ENCODE measurements at regions of chr19 and their contacts with region 1.

Region 1: DNA sequence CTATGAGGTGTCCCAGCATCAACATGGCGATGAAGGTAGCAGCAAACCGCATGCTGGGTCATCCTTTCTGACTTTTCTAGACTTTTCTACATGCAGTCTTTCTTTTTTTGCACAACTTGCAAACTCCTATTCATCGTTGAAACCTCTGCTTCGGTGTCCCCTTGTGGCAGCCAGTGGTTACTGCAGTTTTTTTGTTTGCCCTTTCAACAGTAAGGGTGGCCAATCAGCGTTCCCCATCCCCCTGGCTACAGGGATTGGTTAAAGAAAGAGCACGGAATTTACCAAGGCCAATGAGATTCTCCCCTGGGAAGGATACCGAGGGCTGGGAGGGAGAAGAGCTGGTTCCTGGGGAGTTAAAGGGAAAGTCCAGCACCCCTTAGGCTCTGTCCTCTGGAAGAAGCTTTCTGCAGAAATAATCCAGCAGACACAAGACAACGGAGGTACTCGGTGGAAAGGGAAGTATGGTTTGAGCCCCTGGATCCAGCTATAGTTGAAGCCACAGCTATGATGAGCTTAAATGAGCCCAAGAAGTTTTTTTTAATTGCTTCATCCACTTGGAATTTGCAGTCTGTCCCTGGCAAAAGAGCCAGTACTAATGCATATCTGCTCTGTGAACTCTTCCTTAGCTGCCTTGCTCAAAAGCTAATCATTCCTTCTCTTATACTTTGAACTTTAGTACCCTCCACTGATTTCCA is 5.6 kb upstream of the LSM4 start:
- DNase-seq: peak; percentile 91
- ATAC-seq: peak; percentile 99
- H3K4me3 Mint-ChIP-seq: peak overlapping the region; percentile 70
- H3K27ac Mint-ChIP-seq: peak overlapping the region; percentile 89
- H3K4me1 Mint-ChIP-seq: peaks cover 19% of the 10 kb centered on the region
- H3K27me3 Mint-ChIP-seq: no peaks in the 10 kb centered on the region; the same call in none of the 2 replicates
- CTCF ChIP-seq: peak; percentile 86

Region 2: DNA sequence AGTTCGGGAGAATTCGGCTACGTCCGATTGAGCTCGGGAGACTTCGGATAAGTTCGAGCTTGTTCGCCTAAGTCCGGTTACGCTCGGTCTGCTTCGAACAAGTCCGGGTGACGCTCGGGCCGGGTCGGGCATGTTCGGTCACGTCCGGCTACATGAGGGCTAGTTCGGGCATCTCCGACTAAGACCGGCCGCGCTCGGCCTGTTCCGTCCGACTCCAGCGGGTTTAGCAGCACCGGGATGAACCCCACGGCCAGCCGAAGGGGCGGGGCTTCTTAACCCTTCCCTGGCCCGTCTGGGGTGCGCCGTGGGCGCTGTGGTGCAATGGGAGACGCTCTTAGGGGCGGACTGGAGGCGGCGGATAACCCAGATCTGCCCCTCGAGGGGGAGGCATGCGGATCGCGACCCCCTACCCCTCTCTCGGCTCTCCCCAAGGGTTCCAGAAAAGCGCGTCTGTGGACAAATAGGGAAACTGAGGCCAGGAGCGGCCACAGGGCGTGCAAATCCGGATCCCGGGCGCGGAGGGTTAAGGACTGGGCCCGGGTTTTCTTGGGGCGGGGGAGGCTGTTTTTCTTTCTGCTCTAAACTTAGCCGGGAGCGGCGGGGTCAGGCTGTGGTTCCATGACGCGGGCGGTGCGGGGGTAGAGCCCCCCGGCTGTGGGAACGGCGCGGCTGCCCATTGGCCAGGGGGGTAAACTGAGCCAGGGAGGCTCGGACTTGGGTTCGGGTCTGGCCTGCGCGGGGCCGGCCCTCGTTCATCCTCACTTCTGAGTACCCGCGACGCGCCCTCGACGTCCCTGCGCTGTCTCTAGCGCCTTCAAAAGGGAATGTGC is 103.7 kb before region 1 on chr19:
- CTCF ChIA-PET with region 1: interaction called, 13 read pairs
- POLR2A ChIA-PET with region 1: no interaction called
- DNase-seq: peak; percentile 100
- ATAC-seq: peak; percentile 91
- H3K4me3 Mint-ChIP-seq: peak overlapping the region; percentile 92
- H3K27ac Mint-ChIP-seq: peak overlapping the region; percentile 100
- H3K4me1 Mint-ChIP-seq: peaks cover 30% of the 10 kb centered on the region
- H3K27me3 Mint-ChIP-seq: peaks cover 42% of the 10 kb centered on the region
- CTCF ChIP-seq: no peak

Region 3: DNA sequence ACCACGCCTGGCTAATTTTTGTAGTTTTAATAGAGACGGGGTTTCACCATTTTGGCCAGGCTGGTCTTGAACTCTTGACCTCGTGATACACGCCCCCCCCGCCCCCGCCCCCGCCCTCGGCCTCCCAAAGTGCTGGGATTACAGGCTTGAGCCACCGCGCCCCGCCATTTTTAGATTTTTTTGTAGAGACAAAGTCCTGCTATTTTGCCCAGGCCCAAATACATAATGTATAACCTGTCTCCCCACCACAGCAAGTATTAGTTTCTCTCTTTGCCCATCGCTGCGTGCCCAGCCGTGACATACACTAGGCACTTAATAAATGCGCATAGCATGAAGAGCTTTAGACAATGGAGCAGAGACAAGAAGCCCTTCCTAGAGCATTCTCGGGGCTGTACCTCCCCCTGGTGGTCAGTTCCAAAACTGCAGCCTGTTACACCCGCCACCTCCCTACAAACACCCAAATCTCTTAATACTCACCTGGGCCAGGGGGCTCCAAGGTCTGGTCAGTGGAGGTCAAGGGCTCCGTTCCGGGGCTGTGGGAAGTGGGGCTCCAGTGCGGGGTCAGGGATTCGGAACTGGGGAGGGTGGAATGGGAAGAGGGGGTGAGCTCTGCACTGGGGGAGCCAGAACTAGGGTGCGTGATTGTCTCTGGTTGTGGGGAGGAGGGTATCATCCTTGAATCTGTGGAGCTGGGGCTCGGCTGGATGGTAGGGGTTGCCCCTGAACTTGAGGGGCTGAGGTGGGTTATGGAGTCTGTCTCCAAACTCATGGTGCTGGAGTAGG is 76.7 kb before region 1 on chr19:
- CTCF ChIA-PET with region 1: interaction called, 14 read pairs
- POLR2A ChIA-PET with region 1: no interaction called
- DNase-seq: peak; percentile 93
- ATAC-seq: peak; percentile 83
- H3K4me3 Mint-ChIP-seq: no peak overlapping the region
- H3K27ac Mint-ChIP-seq: peak overlapping the region; percentile 35; the same call in 1 of the 2 replicates
- H3K4me1 Mint-ChIP-seq: peaks cover 22% of the 10 kb centered on the region
- H3K27me3 Mint-ChIP-seq: peaks cover 13% of the 10 kb centered on the region
- CTCF ChIP-seq: peak; percentile 99

Region 4: GRCh38 chr19:18291590-18292461 is 36.7 kb before region 1 on chr19:
- CTCF ChIA-PET with region 1: interaction called, 35 read pairs
- POLR2A ChIA-PET with region 1: interaction called, 3 read pairs
- DNase-seq: peak; percentile 73
- ATAC-seq: peak; percentile 14
- H3K4me3 Mint-ChIP-seq: peak overlapping the region; percentile 83
- H3K27ac Mint-ChIP-seq: peak overlapping the region; percentile 99
- H3K4me1 Mint-ChIP-seq: peaks cover 48% of the 10 kb centered on the region
- H3K27me3 Mint-ChIP-seq: peaks cover 3% of the 10 kb centered on the region; the same call in 1 of the 2 replicates
- CTCF ChIP-seq: no peak

Region 5: GRCh38 chr19:18349524-18350128 is 21.1 kb after region 1 on chr19:
- CTCF ChIA-PET with region 1: interaction called, 16 read pairs
- POLR2A ChIA-PET with region 1: no interaction called
- DNase-seq: peak; percentile 71
- ATAC-seq: 0 out of 2 replicates have a peak, but pooled peaks have one; percentile 40
- H3K4me3 Mint-ChIP-seq: no peak overlapping the region
- H3K27ac Mint-ChIP-seq: peak overlapping the region; percentile 19; the same call in 1 of the 2 replicates
- H3K4me1 Mint-ChIP-seq: peaks cover 27% of the 10 kb centered on the region
- H3K27me3 Mint-ChIP-seq: no peaks in the 10 kb centered on the region
- CTCF ChIP-seq: 0 out of 2 replicates have a peak, but pooled peaks have one; percentile 18

Region 6: GRCh38 chr19:18408053-18408476 is 79.6 kb after region 1 on chr19:
- CTCF ChIA-PET with region 1: interaction called, 30 read pairs
- POLR2A ChIA-PET with region 1: no interaction called
- DNase-seq: peak; percentile 74
- ATAC-seq: peak; percentile 47
- H3K4me3 Mint-ChIP-seq: no peak overlapping the region
- H3K27ac Mint-ChIP-seq: no peak overlapping the region
- H3K4me1 Mint-ChIP-seq: peaks cover 6% of the 10 kb centered on the region
- H3K27me3 Mint-ChIP-seq: peaks cover 10% of the 10 kb centered on the region
- CTCF ChIP-seq: peak; percentile 29; the same call in 1 of the 2 replicates

Region 7: GRCh38 chr19:18428787-18429674 is 100.5 kb after region 1 on chr19:
- CTCF ChIA-PET with region 1: interaction called, 10 read pairs
- POLR2A ChIA-PET with region 1: no interaction called
- DNase-seq: peak; percentile 93
- ATAC-seq: peak; percentile 70
- H3K4me3 Mint-ChIP-seq: peak overlapping the region; percentile 60
- H3K27ac Mint-ChIP-seq: no peak overlapping the region
- H3K4me1 Mint-ChIP-seq: peaks cover 27% of the 10 kb centered on the region
- H3K27me3 Mint-ChIP-seq: no peaks in the 10 kb centered on the region
- CTCF ChIP-seq: no peak

Region 8: GRCh38 chr19:18478569-18479311 is 150.3 kb after region 1 on chr19:
- CTCF ChIA-PET with region 1: no interaction called
- POLR2A ChIA-PET with region 1: no interaction called
- DNase-seq: no peak
- ATAC-seq: no peak
- H3K4me3 Mint-ChIP-seq: no peak overlapping the region
- H3K27ac Mint-ChIP-seq: peak overlapping the region; percentile 85
- H3K4me1 Mint-ChIP-seq: peaks cover 28% of the 10 kb centered on the region
- H3K27me3 Mint-ChIP-seq: no peaks in the 10 kb centered on the region
- CTCF ChIP-seq: no peak

Measured in WTC11 (cell line).